CD8-positive, alpha-beta memory T cell (primary cell): ENCODE measurements at regions of chr16 and their contacts with region 1.

Region 1: DNA sequence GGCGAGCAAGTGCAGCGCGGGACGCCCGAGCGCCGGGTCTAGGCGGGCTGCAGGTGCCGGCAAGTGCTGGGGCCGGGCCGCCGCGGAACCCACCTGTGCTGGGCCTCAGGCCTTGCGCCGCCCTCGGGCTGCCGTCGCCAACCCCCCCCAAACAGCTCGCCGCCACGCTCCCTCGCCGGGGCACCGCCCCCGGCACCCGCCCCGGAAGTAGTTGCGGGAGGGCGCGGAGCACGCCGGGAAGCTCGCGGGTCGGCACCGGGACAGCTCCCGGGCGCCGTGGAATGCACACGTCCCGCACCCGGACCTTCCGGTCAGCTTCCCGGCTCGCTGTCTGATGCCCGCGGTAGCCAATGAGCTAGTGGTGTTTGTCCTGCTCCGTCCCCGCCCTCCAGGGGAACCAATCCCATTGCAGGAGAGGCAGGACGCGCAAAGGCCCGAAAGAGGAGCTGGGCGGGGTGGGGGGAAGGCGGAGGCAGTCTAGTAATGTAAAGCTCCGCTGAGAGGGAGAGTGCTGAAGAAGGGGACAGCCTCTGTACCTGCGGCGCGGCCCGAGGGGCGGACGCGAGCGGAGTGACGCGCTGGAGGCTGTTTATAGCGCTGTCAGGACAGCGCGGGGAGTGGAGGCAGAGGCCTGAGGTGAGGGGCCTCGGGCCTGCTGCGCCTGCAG is at the starts of genes ANKS3 and DNAAF8:
- DNase-seq: peak; percentile 74 to 85 (median 79)
- H3K4me3 ChIP-seq: peak within 1 kb of the TSS; percentile 99
- H3K4me3 Mint-ChIP-seq: peak within 1 kb of the TSS; percentile 86 to 97 (median 91)
- H3K27ac ChIP-seq: peak within 1 kb of the TSS; percentile 88
- H3K27ac Mint-ChIP-seq: peak within 1 kb of the TSS; percentile 88 to 99 (median 93)
- H3K4me1 ChIP-seq: peaks cover 18% of the 10 kb centered on the region
- H3K4me1 Mint-ChIP-seq: peaks cover 19 to 33% (median 25%) of the 10 kb centered on the region in 3 donors
- H3K27me3 ChIP-seq: no peaks in the 10 kb centered on the region
- H3K27me3 Mint-ChIP-seq: no peaks in the 10 kb centered on the region
- total RNA-seq, gene ANKS3: 16.9 to 18.5 TPM
- total RNA-seq, gene DNAAF8: 0.15 to 0.31 TPM

Region 2: GRCh38 chr16:4624015-4624826 is 110.0 kb before region 1 on chr16 and contains the start of gene MGRN1:
- CTCF ChIA-PET with region 1: interaction called, 12 read pairs
- POLR2A ChIA-PET with region 1: no interaction called
- DNase-seq: peak; percentile 85 to 93 (median 91)
- H3K4me3 ChIP-seq: peak within 1 kb of the TSS; percentile 67
- H3K4me3 Mint-ChIP-seq: peak within 1 kb of the TSS; percentile 88 to 98 (median 94)
- H3K27ac ChIP-seq: peak within 1 kb of the TSS; percentile 94
- H3K27ac Mint-ChIP-seq: peak within 1 kb of the TSS; percentile 84 to 100 (median 98)
- H3K4me1 ChIP-seq: peaks cover 24% of the 10 kb centered on the region
- H3K4me1 Mint-ChIP-seq: peaks cover 28 to 41% (median 38%) of the 10 kb centered on the region in 3 donors
- H3K27me3 ChIP-seq: no peaks in the 10 kb centered on the region
- H3K27me3 Mint-ChIP-seq: no peaks in the 10 kb centered on the region
- total RNA-seq, gene MGRN1: 67.3 to 69.7 TPM

Region 3: DNA sequence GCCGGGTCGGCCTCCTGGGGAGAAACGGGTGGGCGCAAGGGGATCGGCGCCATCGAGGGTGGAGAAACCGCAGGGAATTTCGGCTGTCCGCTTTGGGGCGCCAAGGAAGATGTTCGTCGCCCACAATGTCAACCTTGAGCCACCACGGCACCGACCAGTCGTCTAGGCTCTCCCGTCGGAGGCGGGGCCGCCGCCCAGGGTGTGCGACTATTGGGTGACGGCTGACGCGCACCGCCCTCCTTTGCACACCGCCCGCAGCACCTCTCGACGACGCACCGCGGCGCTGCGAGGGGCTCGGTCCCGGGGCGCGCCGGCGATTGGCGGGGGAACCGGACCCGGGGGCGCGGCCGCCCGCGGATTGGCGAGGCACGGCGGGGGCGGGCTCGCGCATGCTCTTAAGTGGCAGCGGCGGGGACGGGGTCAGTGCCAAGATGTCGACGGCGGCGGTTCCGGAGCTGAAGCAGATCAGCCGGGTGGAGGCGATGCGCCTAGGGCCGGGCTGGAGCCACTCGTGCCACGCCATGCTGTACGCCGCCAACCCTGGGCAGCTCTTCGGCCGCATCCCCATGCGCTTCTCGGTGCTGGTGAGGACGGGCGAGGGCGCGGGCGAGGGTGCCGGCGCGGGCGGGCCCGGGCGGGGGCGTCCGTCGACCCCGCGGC is 40.8 kb before region 1 on chr16 and contains the start of gene NUDT16L1:
- CTCF ChIA-PET with region 1: interaction called, 4 read pairs
- POLR2A ChIA-PET with region 1: interaction called, 10 read pairs
- DNase-seq: peak; percentile 95 to 99 (median 96)
- H3K4me3 ChIP-seq: peak within 1 kb of the TSS; percentile 88
- H3K4me3 Mint-ChIP-seq: peak within 1 kb of the TSS; percentile 81 to 94 (median 87)
- H3K27ac ChIP-seq: peak within 1 kb of the TSS; percentile 76
- H3K27ac Mint-ChIP-seq: peak within 1 kb of the TSS; percentile 80 to 96 (median 89)
- H3K4me1 ChIP-seq: peaks cover 28% of the 10 kb centered on the region
- H3K4me1 Mint-ChIP-seq: peaks cover 5 to 28% (median 13%) of the 10 kb centered on the region in 3 donors
- H3K27me3 ChIP-seq: no peaks in the 10 kb centered on the region
- H3K27me3 Mint-ChIP-seq: peaks cover 0 to 4% of the 10 kb centered on the region in 2 donors
- total RNA-seq, gene NUDT16L1: 40.6 to 47.7 TPM

Region 4: GRCh38 chr16:4766874-4767628 is 32.9 kb after region 1 on chr16 and contains the start of gene ZNF500:
- CTCF ChIA-PET with region 1: interaction called, 8 read pairs
- POLR2A ChIA-PET with region 1: interaction called, 27 read pairs
- DNase-seq: peak; percentile 89 to 93 (median 93)
- H3K4me3 ChIP-seq: peak within 1 kb of the TSS; percentile 95
- H3K4me3 Mint-ChIP-seq: peak within 1 kb of the TSS; percentile 88 to 99 (median 91)
- H3K27ac ChIP-seq: peak within 1 kb of the TSS; percentile 64
- H3K27ac Mint-ChIP-seq: peak within 1 kb of the TSS; percentile 85 to 98 (median 93)
- H3K4me1 ChIP-seq: peaks cover 24% of the 10 kb centered on the region
- H3K4me1 Mint-ChIP-seq: peaks cover 23 to 39% (median 35%) of the 10 kb centered on the region in 3 donors
- H3K27me3 ChIP-seq: no peaks in the 10 kb centered on the region
- H3K27me3 Mint-ChIP-seq: peaks cover 0 to 1% of the 10 kb centered on the region in 2 donors
- total RNA-seq, gene ZNF500: 12.7 to 13.7 TPM

Region 5: GRCh38 chr16:4802659-4803287 is 68.6 kb after region 1 on chr16:
- CTCF ChIA-PET with region 1: interaction called, 8 read pairs
- POLR2A ChIA-PET with region 1: interaction called, 14 read pairs
- DNase-seq: peak; percentile 86 to 93 (median 87)
- H3K4me3 ChIP-seq: peak overlapping the region; percentile 56
- H3K4me3 Mint-ChIP-seq: peak overlapping the region; percentile 82 to 95 (median 88)
- H3K27ac ChIP-seq: peak overlapping the region; percentile 67
- H3K27ac Mint-ChIP-seq: peak overlapping the region; percentile 36 to 86 (median 68)
- H3K4me1 ChIP-seq: peaks cover 16% of the 10 kb centered on the region
- H3K4me1 Mint-ChIP-seq: peaks cover 9 to 25% (median 10%) of the 10 kb centered on the region in 3 donors
- H3K27me3 ChIP-seq: no peaks in the 10 kb centered on the region
- H3K27me3 Mint-ChIP-seq: no peaks in the 10 kb centered on the region